Breast epithelium (tissue), 4 donors: ENCODE measurements at regions of chr3 and their contacts with region 1.

Region 1: DNA sequence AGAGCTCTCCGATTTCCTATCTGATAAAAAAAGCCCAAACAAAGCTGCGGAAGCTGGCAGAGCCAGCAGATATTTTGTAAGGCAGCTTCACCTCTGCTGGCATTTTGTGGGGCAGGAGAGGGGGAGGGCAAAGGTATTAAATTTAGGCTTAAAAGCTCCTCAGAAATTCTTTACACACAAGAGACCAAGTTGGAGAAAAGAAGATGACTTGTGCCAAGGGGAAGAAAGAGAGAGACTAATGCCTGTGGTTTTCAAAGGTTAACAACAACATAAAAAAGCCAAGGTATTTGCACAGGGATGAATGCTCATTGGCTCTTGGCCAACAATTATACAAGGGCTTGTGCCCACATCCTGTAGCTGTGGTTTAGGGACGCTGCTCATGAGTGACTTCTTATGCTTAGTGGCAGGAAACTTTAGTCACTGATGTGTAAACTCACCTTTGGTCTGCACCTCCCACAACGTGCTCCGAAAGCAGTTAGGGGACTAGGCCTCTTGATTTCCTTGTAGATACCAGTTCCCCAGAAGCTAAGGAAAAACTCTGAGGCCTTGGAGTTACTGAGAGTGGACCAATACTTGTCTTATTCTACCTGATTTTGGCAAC is 152.9 kb downstream of the TPRG1 start:
- DNase-seq: peak in 1 of 2 donors; percentile 91
- H3K4me3 ChIP-seq: no peak overlapping the region
- H3K27ac ChIP-seq: peak overlapping the region; percentile 45 to 72
- H3K4me1 ChIP-seq: peaks cover 0 to 4% of the 10 kb centered on the region in 2 donors
- H3K27me3 ChIP-seq: no peaks in the 10 kb centered on the region
- CTCF ChIP-seq: no peak
- POLR2A ChIP-seq: no peak

Region 2: DNA sequence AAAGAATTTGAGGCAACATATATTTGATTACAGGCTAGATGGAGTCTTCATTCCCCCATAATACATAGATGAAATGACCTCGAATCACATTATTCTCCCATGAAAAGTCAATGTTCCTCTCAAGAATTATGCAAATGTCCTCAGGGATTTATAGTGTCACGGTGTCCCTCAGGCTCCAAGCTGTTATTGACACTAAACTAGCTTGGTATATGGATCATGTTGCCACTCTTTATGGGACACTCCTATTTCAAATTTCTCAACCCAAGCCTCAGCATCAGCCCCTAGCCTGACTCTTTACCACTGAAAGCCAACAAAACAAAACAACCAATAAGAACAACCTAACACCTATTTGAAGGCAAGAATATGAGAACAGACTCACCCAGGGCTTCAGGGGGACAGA is 13.1 kb before region 1 on chr3:
- intact Hi-C with region 1: loop called (anchors 1 kb)
- DNase-seq: no peak
- H3K4me3 ChIP-seq: no peak overlapping the region
- H3K27ac ChIP-seq: no peak overlapping the region
- H3K4me1 ChIP-seq: no peaks in the 10 kb centered on the region
- H3K27me3 ChIP-seq: no peaks in the 10 kb centered on the region
- CTCF ChIP-seq: no peak
- POLR2A ChIP-seq: no peak

Region 3: DNA sequence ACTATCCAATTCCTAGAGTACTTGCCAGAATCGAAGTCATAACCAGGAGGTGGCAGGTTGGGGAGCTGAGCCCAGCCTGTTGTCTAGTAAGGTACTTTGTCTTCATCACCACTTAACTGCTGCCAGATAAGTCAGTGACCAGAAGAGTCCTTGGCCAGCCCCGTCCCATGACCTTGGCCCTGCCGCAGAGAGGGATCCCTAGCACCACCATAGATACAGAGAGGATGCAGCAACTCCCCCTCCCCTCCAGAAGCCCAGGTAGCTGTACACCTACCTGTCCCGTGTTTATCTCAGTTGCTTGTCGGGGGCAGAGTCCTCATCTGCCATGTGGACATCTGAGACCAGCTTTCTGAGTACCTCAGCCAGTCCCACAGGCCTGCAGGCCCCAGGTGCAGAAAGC is 153.0 kb after region 1 on chr3:
- intact Hi-C with region 1: no loop called
- DNase-seq: no peak
- H3K4me3 ChIP-seq: no peak overlapping the region
- H3K27ac ChIP-seq: no peak overlapping the region
- H3K4me1 ChIP-seq: no peaks in the 10 kb centered on the region
- H3K27me3 ChIP-seq: no peaks in the 10 kb centered on the region
- CTCF ChIP-seq: no peak
- POLR2A ChIP-seq: no peak